Aorta (tissue), 5 donors: ENCODE measurements at regions of chr3 and their contacts with region 1.

Region 1: GRCh38 chr3:8416965-8417364 is 84.7 kb upstream of the LMCD1 start:
- DNase-seq: no peak
- ATAC-seq: no peak
- H3K4me3 ChIP-seq: no peak overlapping the region
- H3K27ac ChIP-seq: no peak overlapping the region
- H3K4me1 ChIP-seq: no peaks in the 10 kb centered on the region
- H3K27me3 ChIP-seq: no peaks in the 10 kb centered on the region

Region 2: GRCh38 chr3:6785726-6786125 is 1631.2 kb before region 1 on chr3:
- intact Hi-C with region 1: loop called in 1 of 2 experiments (anchors 10 kb)
- DNase-seq: no peak
- ATAC-seq: no peak
- H3K4me3 ChIP-seq: no peak overlapping the region
- H3K27ac ChIP-seq: no peak overlapping the region
- H3K4me1 ChIP-seq: no peaks in the 10 kb centered on the region
- H3K27me3 ChIP-seq: no peaks in the 10 kb centered on the region